ENCODE measurements at regions of chr3 and their contacts with region 1.

Region 1: DNA sequence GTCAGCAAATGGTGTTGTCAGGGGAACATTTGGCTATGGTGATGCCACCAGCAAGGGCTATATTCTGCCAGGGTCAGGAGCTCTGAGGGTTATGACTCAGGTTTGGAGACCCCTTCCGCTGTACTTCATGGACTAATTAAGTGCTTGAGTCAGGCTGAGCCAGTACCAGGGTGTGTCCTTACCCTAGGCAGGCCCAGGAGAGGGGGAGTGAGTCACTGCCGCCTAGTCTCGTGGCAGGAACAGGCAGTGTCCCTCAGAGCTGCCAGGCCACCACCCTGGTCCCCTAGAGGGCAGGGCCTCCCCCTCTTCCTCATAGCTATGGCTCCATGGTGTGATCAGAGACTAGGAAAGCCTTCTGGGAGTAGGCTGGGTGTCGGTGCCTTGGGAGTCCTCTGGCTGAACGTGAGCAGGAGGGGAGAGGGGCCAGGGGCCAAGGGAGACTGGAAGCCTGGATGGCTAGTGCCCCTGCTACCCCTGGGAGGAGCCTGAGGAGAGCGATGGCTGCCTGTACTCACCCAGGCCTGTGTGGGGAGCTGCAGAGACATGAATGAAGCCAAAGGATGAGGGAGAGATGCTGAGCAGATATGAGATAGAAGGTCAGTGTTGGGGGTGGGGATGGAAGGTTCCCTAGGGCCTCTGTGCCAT is 10.6 kb downstream of the MAPKAPK3 start:
- DNase-seq: peak; percentile 96 to 99
- ATAC-seq: peak; percentile 66 to 76
- H3K4me3 ChIP-seq: peak overlapping the region in 2 of 4 donors; percentile 12 to 22
- H3K27ac ChIP-seq: peak overlapping the region; percentile 96 to 98 (median 98)
- H3K4me1 ChIP-seq: peaks cover 63 to 96% of the 10 kb centered on the region in 2 donors
- H3K27me3 ChIP-seq: no peaks in the 10 kb centered on the region
- CTCF ChIP-seq: peak; percentile 54 to 64 (median 63)
- POLR2A ChIP-seq: peak; percentile 54 to 74

Region 2: GRCh38 chr3:50580683-50581458 is 46.7 kb before region 1 on chr3:
- in situ Hi-C with region 1: no loop called
- intact Hi-C with region 1: loop called (anchors 1 kb)
- DNase-seq: no peak
- ATAC-seq: no peak
- H3K4me3 ChIP-seq: no peak overlapping the region
- H3K27ac ChIP-seq: peak overlapping the region; percentile 95 to 99 (median 97)
- H3K4me1 ChIP-seq: peaks cover 50 to 51% of the 10 kb centered on the region in 2 donors
- H3K27me3 ChIP-seq: no peaks in the 10 kb centered on the region
- CTCF ChIP-seq: peak in 1 of 5 experiments; percentile 30
- POLR2A ChIP-seq: no peak

Region 3: GRCh38 chr3:50600841-50601591 is 26.5 kb before region 1 on chr3:
- in situ Hi-C with region 1: no loop called
- intact Hi-C with region 1: loop called (anchors 2 kb)
- DNase-seq: peak; percentile 96 to 99
- ATAC-seq: peak; percentile 75 to 76
- H3K4me3 ChIP-seq: peak overlapping the region in 3 of 4 donors; percentile 5 to 17 (median 10)
- H3K27ac ChIP-seq: peak overlapping the region; percentile 95 to 99 (median 96)
- H3K4me1 ChIP-seq: peaks cover 65 to 67% of the 10 kb centered on the region in 2 donors
- H3K27me3 ChIP-seq: no peaks in the 10 kb centered on the region
- CTCF ChIP-seq: peak in 1 of 5 experiments; percentile 7
- POLR2A ChIP-seq: peak; percentile 55 to 65

Region 4: GRCh38 chr3:50616770-50617095 is 10.8 kb before region 1 on chr3:
- in situ Hi-C with region 1: no loop called
- intact Hi-C with region 1: loop called (anchors 1 kb)
- DNase-seq: peak; percentile 91 to 92
- ATAC-seq: peak; percentile 40 to 50
- H3K4me3 ChIP-seq: peak overlapping the region; percentile 66 to 86 (median 80)
- H3K27ac ChIP-seq: peak overlapping the region; percentile 96 to 98 (median 98)
- H3K4me1 ChIP-seq: peaks cover 48 to 51% of the 10 kb centered on the region in 2 donors
- H3K27me3 ChIP-seq: no peaks in the 10 kb centered on the region
- CTCF ChIP-seq: no peak
- POLR2A ChIP-seq: peak in 1 of 2 donors; percentile 67

Region 5: DNA sequence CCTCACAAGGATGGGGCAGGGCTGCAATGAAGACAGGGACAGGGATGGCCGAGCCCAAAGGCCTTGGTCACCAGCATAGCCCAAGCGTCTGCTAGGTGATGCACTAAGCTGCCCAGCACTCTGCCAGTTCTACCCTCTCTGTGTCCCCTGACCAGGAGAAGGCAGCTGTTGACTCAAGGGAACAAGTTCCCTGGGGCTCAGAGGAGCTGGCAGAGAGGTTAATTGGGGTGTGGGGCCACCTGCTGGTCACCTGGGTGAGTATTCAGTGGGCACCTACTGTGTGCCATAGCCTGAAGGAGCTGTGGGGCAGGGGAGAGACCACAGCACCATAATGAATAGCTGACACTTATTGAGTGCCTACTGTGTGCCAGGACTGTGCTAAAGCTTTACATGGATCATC is 25.2 kb after region 1 on chr3:
- in situ Hi-C with region 1: no loop called
- intact Hi-C with region 1: loop called (anchors 1 kb)
- DNase-seq: peak; percentile 33 to 75
- ATAC-seq: peak; percentile 42 to 60
- H3K4me3 ChIP-seq: no peak overlapping the region
- H3K27ac ChIP-seq: peak overlapping the region; percentile 54 to 74 (median 69)
- H3K4me1 ChIP-seq: peaks cover 27 to 32% of the 10 kb centered on the region in 2 donors
- H3K27me3 ChIP-seq: no peaks in the 10 kb centered on the region
- CTCF ChIP-seq: peak; percentile 42 to 83 (median 71)
- POLR2A ChIP-seq: no peak

Region 6: GRCh38 chr3:50696276-50696675 is 68.7 kb after region 1 on chr3:
- in situ Hi-C with region 1: no loop called
- intact Hi-C with region 1: no loop called
- DNase-seq: no peak
- ATAC-seq: no peak
- H3K4me3 ChIP-seq: no peak overlapping the region
- H3K27ac ChIP-seq: no peak overlapping the region
- H3K4me1 ChIP-seq: no peaks in the 10 kb centered on the region
- H3K27me3 ChIP-seq: no peaks in the 10 kb centered on the region
- CTCF ChIP-seq: no peak
- POLR2A ChIP-seq: no peak

Region 7: DNA sequence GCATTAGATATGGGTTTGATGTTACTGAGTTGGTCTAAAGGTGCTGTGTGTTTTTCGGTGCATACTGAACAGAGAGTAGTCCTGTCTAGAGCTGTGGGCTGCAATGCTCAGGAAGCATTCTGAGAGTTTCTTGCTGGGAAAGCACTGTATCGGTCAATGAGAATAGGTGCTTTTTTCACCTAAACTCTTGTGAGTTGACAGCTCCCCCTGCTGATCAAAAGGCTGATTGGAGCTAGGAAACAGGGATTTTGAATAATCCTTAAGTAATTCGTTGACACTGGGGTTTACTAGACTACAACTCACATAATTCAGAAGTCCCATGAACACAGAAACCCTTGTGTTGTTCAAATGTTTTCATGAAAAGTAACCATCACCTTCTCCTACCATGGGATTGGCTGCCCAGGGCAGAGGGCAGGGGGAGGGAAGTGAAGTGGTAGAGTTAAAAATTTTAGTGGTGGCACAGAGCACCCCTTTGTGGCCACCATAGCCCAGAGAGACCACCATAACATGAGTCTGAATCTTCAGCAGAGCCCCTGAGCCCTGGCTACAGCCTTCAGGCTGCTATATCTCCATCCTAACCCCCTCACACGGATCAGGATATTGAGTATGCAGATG is 744.5 kb after region 1 on chr3:
- in situ Hi-C with region 1: loop called in 2 of 4 experiments (anchors 10 to 25 kb)
- intact Hi-C with region 1: no loop called
- DNase-seq: no peak
- ATAC-seq: peak; percentile 30 to 46
- H3K4me3 ChIP-seq: no peak overlapping the region
- H3K27ac ChIP-seq: no peak overlapping the region
- H3K4me1 ChIP-seq: no peaks in the 10 kb centered on the region
- H3K27me3 ChIP-seq: no peaks in the 10 kb centered on the region
- CTCF ChIP-seq: peak in 4 of 5 experiments; percentile 19 to 46 (median 40)
- POLR2A ChIP-seq: no peak

Measured in gastrocnemius medialis (tissue), 4 donors.